ENCODE measurements at regions of chr1 and their contacts with region 1.

Region 1: GRCh38 chr1:8348777-8349491 is 31.0 kb downstream of the SLC45A1 start:
- DNase-seq: peak; percentile 71
- H3K4me3 ChIP-seq: no peak overlapping the region
- H3K27ac ChIP-seq: peak overlapping the region in 1 of 4 donors; percentile 42
- H3K4me1 ChIP-seq: peaks cover 0 to 20% (median 4%) of the 10 kb centered on the region in 4 donors
- H3K27me3 ChIP-seq: no peaks in the 10 kb centered on the region
- CTCF ChIP-seq: peak; percentile 74 to 93 (median 91)
- EP300 ChIP-seq: no peak
- POLR2A ChIP-seq: no peak

Region 2: DNA sequence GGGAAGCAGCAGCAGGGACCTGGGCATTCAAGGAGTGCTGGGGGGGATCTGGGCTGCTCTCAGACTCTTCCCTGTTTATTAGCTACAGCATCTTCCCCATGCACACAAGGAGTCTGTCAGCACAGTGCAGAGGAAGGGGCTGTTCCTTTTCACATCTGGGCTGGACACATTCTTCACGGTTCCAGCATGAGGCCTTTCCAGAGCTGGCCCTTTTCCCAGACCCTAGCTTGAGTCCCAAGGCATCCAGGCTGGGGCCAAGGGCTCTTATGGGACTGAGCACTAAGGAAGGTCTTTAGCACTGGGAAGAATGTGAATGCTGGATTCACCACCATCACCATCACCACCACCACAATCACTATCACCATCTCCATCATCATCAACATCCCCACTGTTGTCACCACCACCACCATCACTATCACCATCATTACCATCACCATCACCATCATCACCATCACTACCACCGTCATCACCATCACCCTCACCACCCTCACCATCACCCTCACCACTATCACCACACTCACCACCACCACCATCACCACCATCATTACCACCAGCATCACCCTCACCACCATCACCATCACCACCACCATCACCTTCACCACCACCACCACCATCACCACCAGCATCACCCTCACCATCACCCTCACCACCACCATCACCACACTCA is 359.0 kb before region 1 on chr1:
- in situ Hi-C with region 1: loop called in 1 of 4 experiments (anchors 10 kb)
- intact Hi-C with region 1: no loop called
- DNase-seq: no peak
- H3K4me3 ChIP-seq: no peak overlapping the region
- H3K27ac ChIP-seq: no peak overlapping the region
- H3K4me1 ChIP-seq: no peaks in the 10 kb centered on the region
- H3K27me3 ChIP-seq: no peaks in the 10 kb centered on the region
- CTCF ChIP-seq: no peak
- EP300 ChIP-seq: no peak
- POLR2A ChIP-seq: no peak

Region 3: GRCh38 chr1:8015036-8015808 is 333.7 kb before region 1 on chr1:
- in situ Hi-C with region 1: loop called in 1 of 4 experiments (anchors 10 kb)
- intact Hi-C with region 1: no loop called
- DNase-seq: peak; percentile 41
- H3K4me3 ChIP-seq: no peak overlapping the region
- H3K27ac ChIP-seq: peak overlapping the region; percentile 57 to 75 (median 70)
- H3K4me1 ChIP-seq: peaks cover 29 to 55% (median 41%) of the 10 kb centered on the region in 4 donors
- H3K27me3 ChIP-seq: no peaks in the 10 kb centered on the region
- CTCF ChIP-seq: peak; percentile 60 to 79 (median 62)
- EP300 ChIP-seq: no peak
- POLR2A ChIP-seq: no peak

Region 4: GRCh38 chr1:8194481-8195233 is 154.3 kb before region 1 on chr1:
- in situ Hi-C with region 1: no loop called
- intact Hi-C with region 1: no loop called
- DNase-seq: no peak
- H3K4me3 ChIP-seq: no peak overlapping the region
- H3K27ac ChIP-seq: peak overlapping the region in 1 of 4 donors; percentile 10
- H3K4me1 ChIP-seq: peaks cover 7 to 18% (median 12%) of the 10 kb centered on the region in 4 donors
- H3K27me3 ChIP-seq: no peaks in the 10 kb centered on the region
- CTCF ChIP-seq: no peak
- EP300 ChIP-seq: no peak
- POLR2A ChIP-seq: no peak

Measured in transverse colon (tissue), 4 donors.